ENCODE measurements at regions of chr16 and their contacts with region 1.

Region 1: GRCh38 chr16:47141773-47142485 is 1.8 kb downstream of the NETO2 start:
- DNase-seq: peak; percentile 31
- H3K4me3 ChIP-seq: peak overlapping the region; percentile 73
- CTCF ChIP-seq: peak; percentile 98

Region 2: DNA sequence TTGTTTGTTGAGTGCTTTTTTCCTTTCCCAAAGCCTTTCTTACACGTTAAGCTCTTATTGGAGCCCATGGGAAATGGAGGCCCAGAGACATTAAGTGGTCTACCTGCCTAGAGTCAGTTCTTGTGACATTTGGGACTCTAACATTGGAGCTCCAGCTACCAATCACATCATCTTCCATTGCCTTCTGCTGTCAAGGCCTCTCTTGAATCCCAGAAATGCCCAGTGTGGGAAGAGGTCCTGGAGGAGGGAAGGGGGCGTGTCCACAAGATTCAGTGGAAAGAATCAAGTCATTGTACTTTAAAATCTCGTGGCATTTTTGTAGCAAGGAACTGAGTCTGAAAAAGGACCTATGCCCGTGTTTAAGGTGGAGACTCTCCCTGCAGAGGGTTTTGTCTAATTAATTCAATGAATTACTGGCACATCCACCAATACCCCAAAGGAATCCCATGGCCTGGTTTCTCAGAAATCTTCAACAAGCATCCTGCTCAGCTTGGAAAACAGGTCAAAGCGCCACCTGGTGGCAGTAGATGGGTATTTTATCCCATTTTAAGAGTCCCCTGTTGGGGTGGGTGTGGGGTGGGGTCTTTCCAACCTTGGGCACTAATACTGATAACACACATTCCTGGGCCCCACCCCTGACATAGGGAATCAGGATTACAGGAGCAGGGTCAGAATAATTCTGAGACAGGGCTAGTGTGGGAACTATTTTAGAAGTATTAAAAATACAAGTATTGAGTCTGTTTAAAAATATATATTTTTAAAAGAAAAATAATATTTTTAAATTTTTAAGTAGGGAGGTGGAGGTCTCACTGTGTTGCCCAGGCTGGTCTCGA is 233.2 kb before region 1 on chr16:
- CTCF ChIA-PET with region 1: no interaction called
- POLR2A ChIA-PET with region 1: no interaction called
- DNase-seq: peak; percentile 5
- H3K4me3 ChIP-seq: no peak overlapping the region
- CTCF ChIP-seq: peak; percentile 58

Region 3: DNA sequence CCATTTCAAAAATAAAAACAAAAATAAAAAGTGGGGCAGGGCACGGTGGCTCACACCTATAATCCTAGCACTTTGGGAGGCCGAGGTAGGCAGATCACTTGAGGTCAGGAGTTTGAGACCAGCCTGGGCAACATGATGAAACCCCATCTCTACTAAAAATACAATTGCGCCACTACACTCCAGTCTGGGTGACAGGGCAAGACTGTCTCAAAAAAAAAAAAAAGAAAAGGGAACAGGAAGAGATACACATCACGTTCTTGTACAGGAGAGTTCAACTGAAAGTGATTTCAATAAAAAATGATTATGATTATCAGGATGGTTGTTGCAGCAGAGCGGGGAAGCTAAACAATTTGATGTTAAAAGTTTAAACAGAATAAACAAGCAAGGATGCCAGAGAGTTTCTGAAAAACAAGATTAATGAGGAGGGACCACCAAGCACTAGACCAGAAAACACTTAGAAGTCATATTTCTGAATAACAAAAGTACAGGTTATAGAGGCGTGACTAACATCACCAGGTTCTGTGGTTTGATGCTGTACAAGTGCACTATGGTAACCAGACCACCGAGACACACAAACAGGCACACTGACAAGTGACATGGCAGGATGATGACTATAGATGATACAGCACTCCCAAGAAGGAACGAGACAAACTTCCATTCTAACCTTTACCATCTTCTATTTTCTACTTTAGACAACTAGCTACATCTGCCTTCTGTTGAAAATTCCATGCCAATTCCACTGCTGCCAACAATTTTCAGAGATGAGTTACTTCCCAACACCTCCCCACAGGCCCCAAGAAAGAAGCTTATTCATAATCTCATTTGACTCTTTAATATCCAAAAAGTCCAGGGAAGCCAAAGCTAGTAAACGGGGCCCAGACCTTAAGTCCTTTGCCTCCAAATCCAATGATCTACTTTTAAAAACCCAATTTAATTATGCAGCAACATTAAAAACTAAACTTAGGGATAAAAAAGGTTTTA is 180.3 kb before region 1 on chr16:
- CTCF ChIA-PET with region 1: interaction called, 12 read pairs
- POLR2A ChIA-PET with region 1: no interaction called
- DNase-seq: no peak
- H3K4me3 ChIP-seq: no peak overlapping the region
- CTCF ChIP-seq: no peak

Region 4: DNA sequence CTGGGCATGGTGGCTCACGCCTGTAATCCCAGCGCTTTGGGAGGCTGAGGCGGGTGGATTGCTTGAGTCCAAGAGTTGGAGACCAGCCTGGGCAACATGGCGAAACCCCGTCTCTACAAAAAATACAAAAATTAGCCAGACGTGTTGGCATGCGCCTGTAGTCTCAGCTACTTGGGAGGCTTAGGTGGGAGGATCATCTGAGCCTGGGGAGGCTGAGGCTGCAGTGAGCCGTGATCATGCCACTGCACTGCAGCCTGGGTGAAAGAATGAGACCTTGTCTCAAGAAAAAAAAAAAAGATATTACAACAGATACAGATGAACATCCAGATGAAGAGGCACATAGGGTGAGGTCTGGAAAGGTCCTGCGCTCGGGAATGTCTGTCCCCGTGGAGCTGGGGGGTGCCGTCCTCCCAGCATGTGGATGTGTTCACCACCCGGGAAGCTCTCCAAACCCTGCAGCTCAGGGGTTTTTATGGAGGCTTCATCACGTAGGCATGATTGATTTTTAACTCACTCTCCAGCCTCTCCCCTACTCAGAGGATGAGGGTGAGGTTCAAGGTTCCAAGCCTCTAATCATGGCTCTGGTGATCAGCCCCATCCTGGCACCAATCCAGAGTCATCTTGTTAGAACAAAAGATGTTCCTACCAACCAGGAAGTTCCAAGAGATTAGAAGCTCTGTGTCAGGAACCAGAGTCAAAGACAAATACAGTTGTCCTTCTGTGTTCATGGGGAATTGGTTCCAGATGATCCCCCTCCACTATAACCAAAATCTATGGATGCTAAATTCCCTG is 83.4 kb before region 1 on chr16:
- CTCF ChIA-PET with region 1: no interaction called
- POLR2A ChIA-PET with region 1: no interaction called
- DNase-seq: no peak
- H3K4me3 ChIP-seq: no peak overlapping the region
- CTCF ChIP-seq: no peak

Region 5: DNA sequence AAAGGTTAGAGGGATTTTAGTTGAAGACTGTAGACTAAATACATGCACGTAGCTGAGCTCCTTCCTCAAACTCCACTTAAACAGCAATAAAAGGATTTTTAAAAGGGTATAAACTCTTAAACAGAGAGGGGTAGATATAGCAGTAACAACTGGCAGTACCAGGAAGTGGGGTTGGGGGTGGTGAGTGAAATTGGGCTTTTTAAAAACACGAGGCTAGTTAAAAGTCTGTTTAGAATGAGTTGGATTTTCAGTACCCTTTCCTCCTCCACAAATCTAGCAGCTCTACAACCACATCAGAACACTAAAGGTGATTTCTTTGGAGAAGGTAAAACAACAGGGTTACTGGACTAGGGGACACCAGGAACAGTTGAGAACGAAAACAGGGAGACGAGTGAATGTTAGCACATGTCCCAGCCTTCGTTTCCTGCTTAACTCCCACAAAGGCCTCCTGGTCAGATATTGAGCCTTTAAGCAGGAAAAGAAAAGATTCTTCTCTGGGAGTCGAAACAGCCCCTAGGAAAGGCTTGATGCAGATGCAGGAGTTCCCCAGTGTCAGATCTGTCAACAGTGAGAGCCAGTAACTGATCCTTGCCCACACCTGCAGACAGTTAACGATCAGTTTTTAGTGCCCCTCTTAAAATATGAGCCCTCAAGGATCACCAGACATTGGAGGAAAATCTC is 12.0 kb before region 1 on chr16:
- CTCF ChIA-PET with region 1: interaction called, 26 read pairs
- POLR2A ChIA-PET with region 1: interaction called, 3 read pairs
- DNase-seq: no peak
- H3K4me3 ChIP-seq: no peak overlapping the region
- CTCF ChIP-seq: no peak

Region 6: DNA sequence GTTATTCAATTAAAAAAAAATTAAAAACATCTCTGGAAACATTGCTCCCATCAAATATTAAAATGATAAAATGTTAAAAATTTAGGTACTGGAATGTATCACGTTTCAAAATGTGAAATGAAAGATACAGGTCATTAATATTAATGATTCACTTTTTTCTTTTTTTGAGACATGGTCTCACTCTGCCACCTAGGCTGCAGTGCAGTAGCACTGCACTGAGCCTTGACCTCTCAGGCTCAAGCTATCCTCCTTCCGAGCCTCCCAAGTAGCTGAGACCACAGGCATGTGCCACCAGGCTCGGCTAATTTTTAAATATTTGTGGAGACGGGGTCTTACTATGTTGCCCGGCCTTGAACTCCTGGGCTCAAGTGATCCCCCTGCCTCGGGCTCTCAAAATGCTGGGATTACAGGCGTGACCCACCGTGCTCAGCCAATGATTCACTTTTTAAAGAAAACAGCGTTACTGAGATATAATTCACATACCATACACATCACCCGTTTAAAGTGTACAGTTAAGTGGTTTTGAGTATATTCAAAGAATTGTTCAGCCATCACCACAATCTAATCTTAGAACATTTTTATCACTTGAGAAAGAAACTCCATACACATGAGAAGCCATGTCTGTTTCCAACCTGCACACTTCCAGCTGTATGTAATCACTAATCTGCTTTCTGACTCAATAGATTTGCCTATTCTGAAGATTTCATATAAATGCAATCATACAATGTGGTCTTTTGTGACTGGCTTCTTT is 20.9 kb after region 1 on chr16:
- CTCF ChIA-PET with region 1: interaction called, 30 read pairs
- POLR2A ChIA-PET with region 1: interaction called, 3 read pairs
- DNase-seq: no peak
- H3K4me3 ChIP-seq: no peak overlapping the region
- CTCF ChIP-seq: no peak

Region 7: GRCh38 chr16:47236716-47237115 is 94.8 kb after region 1 on chr16:
- CTCF ChIA-PET with region 1: no interaction called
- POLR2A ChIA-PET with region 1: no interaction called
- DNase-seq: no peak
- H3K4me3 ChIP-seq: no peak overlapping the region
- CTCF ChIP-seq: no peak

Region 8: GRCh38 chr16:48076455-48077012 is 934.6 kb after region 1 on chr16:
- CTCF ChIA-PET with region 1: interaction called, 13 read pairs
- POLR2A ChIA-PET with region 1: no interaction called
- DNase-seq: no peak
- H3K4me3 ChIP-seq: no peak overlapping the region
- CTCF ChIP-seq: no peak

Region 9: GRCh38 chr16:48150707-48151106 is 1008.8 kb after region 1 on chr16:
- CTCF ChIA-PET with region 1: interaction called, 322 read pairs
- POLR2A ChIA-PET with region 1: no interaction called
- DNase-seq: no peak
- H3K4me3 ChIP-seq: no peak overlapping the region
- CTCF ChIP-seq: no peak